Mammary epithelial cell (primary cell): ENCODE measurements at regions of chr5 and their contacts with region 1.

Region 1: DNA sequence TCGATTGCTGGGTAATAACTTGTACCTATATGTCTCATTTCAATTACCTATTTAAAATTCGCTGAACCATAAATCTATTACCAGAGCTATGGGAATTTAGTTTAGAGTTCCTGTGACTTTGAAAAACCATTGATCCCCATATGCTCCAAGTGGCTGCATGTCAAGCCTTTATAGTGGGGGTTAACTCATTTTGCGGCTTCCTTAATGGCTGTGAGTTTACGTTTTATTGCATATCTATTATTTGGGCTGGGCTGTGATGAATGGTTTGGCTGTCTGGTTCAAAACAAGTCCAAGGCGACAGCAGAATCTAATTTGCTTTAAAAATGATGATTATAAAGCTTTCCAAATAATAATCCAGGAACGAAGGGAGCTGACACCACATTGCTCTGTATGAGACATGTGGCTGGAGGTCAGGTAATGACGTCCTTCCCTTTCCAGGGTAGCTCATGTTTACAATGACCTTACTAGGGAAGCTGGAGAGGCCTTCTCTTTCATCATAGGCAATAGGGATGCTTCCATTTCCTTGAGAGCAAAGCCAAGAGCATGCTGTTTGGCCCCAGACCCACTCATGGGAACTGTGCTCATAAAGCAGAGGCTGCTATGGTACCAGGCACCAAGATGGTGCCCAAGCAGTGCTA is 258.3 kb downstream of the HSPA4 start:
- DNase-seq: no peak
- H3K4me3 ChIP-seq: no peak overlapping the region
- H3K27ac ChIP-seq: no peak overlapping the region
- H3K4me1 ChIP-seq: no peaks in the 10 kb centered on the region
- H3K27me3 ChIP-seq: no peaks in the 10 kb centered on the region
- CTCF ChIP-seq: no peak

Region 2: GRCh38 chr5:133387091-133387490 is 77.0 kb after region 1 on chr5:
- CTCF ChIA-PET with region 1: no interaction called
- dilution Hi-C with region 1: loop called (anchors 5 kb)
- in situ Hi-C with region 1: no loop called
- intact Hi-C with region 1: no loop called
- DNase-seq: no peak
- H3K4me3 ChIP-seq: no peak overlapping the region
- H3K27ac ChIP-seq: no peak overlapping the region
- H3K4me1 ChIP-seq: peaks cover 7% of the 10 kb centered on the region
- H3K27me3 ChIP-seq: no peaks in the 10 kb centered on the region
- CTCF ChIP-seq: no peak